AG04449 (cell line): ENCODE measurements at regions of chr9 and their contacts with region 1.

Region 1: GRCh38 chr9:133992780-133993634 is 883 bp upstream of the VAV2 start:
- DNase-seq: peak; percentile 44
- H3K4me3 ChIP-seq: peak overlapping the region; percentile 86
- CTCF ChIP-seq: peak; percentile 50

Region 2: DNA sequence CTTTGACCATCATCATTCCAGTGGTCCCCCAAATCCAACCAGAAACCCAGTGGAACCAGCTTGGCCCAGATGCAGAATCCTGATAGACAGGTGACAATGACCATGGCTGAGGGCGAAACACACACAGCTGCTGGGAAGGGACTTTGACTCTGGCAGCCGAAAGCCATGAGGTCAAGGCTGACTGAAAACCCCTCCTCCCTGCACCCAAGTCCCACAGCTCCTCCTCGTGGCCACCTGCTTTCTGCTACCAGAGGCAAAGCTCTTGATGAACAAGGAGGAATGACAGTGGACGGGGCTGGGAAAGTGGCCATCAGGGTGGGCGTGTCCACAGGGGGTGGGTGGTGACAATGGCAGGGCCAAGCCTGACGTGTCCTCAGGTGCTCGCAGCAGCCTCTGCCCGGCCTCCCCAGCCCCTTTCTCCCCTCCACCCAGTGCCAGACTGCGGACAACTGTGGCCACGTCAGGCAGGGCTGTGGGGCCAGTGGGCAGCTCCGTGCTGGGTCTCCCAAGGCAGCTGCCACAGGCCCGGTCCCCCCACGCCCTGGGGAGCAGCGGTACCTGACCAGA is 224.1 kb before region 1 on chr9:
- CTCF ChIA-PET with region 1: interaction called, 23 read pairs
- POLR2A ChIA-PET with region 1: no interaction called
- DNase-seq: no peak
- H3K4me3 ChIP-seq: no peak overlapping the region
- CTCF ChIP-seq: no peak

Region 3: GRCh38 chr9:133787754-133788025 is 205.3 kb before region 1 on chr9:
- CTCF ChIA-PET with region 1: interaction called, 364 read pairs
- POLR2A ChIA-PET with region 1: interaction called, 11 read pairs
- DNase-seq: no peak
- H3K4me3 ChIP-seq: no peak overlapping the region
- CTCF ChIP-seq: no peak

Region 4: DNA sequence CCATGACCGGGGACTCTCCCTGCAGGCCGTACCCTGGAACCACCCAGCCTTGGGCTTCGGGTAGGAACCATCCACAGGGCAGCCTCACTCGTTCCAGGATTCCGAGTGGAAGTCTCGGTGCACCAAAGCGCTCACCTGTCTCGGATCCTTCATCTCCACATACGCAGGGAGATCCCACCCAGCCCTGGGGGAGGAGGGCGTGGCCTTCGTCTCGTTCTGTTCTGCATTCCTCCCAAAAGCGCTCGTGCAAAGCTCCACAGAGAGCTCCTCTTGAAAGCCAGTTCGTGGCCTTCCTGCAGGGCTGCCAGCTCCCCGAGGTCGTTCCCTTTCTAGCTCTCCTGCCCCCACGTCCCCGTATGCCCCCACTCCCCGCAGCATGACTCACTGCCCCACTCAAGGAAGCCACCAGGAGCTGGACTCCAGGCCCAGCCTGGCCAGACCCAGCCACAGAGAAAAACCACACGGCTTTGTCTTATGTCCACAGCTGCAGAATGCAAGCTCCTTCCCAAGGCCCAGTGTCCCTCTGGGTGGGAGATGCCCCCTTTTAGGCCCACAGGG is 189.9 kb before region 1 on chr9:
- CTCF ChIA-PET with region 1: interaction called, 362 read pairs
- POLR2A ChIA-PET with region 1: no interaction called
- DNase-seq: no peak
- H3K4me3 ChIP-seq: no peak overlapping the region
- CTCF ChIP-seq: no peak

Region 5: DNA sequence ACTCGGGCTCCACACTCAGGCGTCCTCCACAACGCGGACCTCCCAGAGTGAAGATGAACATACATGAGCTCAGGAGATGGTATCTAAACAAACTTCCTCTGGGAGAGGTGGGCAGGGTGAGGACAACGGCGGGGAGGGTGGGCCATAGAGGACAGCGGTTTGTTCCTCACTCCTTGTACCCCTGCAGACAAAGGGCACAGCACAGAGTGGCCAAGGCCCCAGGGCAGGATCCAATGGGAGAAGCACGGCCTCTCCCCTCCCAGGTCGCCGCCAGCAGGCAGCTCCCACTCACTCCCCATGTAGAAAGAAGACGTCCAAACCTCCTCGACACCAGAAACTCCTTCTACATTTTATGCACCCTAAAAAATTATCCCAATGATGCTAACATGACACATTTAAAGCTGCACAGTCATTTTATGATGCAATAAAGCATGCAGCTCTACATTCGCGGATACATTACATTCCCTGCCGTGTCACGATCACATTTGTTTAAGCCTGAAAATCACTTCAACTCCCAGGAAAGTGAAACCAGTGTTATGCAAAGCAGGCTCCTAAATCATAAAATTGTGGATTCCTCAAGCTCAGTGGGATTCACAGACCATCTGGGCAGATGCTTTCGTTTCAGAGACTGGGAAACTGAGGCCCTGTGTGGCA is 167.3 kb before region 1 on chr9:
- CTCF ChIA-PET with region 1: interaction called, 18 read pairs
- POLR2A ChIA-PET with region 1: no interaction called
- DNase-seq: peak; percentile 40
- H3K4me3 ChIP-seq: no peak overlapping the region
- CTCF ChIP-seq: no peak

Region 6: DNA sequence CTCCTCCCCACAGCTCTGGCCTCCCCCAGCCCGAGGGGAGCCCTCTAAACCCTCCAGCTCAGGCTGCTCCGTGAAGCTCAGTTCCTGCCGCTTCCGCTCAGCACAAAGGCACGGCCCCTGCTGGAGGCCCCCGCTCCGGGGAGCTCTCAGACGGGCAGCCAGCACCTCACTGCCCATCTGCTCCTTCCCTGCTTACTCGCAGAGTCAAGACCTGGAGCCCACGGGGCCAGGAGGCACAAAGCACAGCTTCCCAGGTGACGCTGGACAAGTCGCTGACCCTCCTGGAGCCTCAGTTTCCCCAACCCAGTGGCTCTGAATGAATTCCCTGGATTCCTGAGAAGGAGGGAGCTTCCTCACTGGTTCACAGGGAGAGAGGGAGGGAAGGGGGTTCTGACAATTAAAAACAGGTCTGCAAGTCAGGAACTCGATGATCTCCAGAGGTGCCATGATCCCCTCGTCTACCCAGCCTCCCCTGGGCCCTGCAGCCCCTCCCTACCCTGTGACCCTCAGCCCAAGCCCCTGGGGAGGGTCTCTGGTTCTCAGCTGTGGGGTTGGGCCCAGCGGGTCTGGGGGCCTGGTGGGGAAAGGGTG is 37.1 kb before region 1 on chr9:
- CTCF ChIA-PET with region 1: interaction called, 16 read pairs
- POLR2A ChIA-PET with region 1: interaction called, 4 read pairs
- DNase-seq: no peak
- H3K4me3 ChIP-seq: peak overlapping the region; percentile 29
- CTCF ChIP-seq: peak; percentile 28

Region 7: DNA sequence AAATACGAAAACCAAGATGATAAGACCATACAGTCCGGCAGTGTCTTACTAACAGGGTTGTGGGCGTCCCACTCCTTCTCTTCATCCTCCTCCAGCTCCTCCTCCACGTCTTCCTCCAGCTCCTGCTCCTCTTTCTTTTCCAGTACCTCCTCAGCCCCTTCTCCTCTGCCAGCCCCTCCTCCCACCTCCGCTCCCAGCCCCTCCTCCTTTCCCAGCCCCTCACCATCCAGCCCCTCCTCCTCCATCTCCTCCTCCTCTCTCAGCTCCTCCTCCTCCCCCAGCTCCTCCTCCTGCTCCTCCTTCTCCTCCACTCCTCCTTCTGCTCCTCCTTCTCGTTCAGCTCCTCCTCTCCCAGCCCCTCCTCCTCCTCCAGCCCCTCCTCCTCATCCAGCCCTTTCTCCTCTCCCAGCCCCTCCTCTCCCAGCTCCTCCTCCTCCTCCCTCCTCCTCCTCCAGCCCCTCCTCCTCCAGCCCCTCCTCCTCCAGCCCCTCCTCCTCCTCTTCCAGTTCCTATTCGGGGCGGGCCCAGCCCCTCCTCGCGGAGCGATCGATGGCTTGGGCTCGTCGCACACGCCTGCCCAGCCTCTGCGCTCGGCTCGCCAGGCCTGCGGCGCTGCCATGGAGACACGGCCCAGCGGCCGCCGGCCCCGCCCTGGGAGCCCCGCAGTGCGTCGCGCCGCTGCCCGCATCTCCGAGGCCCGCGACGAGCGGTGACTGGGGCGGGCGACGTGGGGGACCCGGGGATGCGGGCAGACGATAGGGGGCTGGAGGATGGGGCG is 32.0 kb after region 1 on chr9 and contains the start of gene BRD3OS:
- CTCF ChIA-PET with region 1: interaction called, 28 read pairs
- POLR2A ChIA-PET with region 1: interaction called, 3 read pairs
- DNase-seq: peak; percentile 97
- H3K4me3 ChIP-seq: peak within 1 kb of the TSS; percentile 90
- CTCF ChIP-seq: no peak

Region 8: GRCh38 chr9:134135343-134136118 is 142.5 kb after region 1 on chr9 and contains the start of gene WDR5:
- CTCF ChIA-PET with region 1: no interaction called
- POLR2A ChIA-PET with region 1: no interaction called
- DNase-seq: peak; percentile 17
- H3K4me3 ChIP-seq: peak within 1 kb of the TSS; percentile 90
- CTCF ChIP-seq: peak; percentile 21

Region 9: DNA sequence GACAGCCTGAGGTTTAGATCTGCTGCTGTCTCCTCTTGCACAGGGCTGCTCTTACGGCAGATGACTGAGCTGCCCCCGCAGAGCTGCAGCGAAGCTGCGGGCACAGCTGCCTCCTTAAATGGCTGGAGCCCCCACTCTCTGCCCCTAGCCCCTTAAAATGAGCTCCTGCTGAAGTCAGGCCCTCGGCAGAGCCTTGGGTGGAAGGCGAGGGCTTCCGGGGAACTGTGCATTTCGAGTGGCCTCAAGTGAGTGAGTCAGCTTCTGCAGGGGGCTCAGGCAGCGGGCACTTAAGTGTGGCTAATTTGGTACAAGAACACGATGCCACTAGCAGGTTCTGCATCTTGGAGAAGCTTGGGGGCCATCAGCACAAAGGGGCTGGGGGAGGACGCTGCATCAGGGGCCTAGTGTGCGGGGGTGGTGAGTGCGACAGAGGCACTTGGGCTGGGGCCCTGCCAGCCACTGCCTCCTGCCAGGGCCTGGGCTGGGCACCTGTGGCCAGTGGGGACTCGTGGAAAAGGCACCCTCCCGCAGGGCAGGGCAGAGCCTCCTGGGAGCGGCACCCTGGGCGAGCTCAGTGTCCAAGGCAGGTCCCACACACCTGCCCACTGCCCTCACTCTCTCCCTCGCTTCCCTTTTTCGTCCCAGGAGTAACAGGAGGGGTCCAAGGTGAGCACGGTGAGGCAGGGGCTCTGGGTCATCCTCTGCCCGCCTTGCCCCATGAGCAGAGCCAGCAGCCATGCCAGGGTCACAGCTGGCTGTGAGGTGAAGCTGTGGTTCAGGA is 200.1 kb after region 1 on chr9:
- CTCF ChIA-PET with region 1: no interaction called
- POLR2A ChIA-PET with region 1: no interaction called
- DNase-seq: no peak
- H3K4me3 ChIP-seq: no peak overlapping the region
- CTCF ChIP-seq: no peak

Region 10: DNA sequence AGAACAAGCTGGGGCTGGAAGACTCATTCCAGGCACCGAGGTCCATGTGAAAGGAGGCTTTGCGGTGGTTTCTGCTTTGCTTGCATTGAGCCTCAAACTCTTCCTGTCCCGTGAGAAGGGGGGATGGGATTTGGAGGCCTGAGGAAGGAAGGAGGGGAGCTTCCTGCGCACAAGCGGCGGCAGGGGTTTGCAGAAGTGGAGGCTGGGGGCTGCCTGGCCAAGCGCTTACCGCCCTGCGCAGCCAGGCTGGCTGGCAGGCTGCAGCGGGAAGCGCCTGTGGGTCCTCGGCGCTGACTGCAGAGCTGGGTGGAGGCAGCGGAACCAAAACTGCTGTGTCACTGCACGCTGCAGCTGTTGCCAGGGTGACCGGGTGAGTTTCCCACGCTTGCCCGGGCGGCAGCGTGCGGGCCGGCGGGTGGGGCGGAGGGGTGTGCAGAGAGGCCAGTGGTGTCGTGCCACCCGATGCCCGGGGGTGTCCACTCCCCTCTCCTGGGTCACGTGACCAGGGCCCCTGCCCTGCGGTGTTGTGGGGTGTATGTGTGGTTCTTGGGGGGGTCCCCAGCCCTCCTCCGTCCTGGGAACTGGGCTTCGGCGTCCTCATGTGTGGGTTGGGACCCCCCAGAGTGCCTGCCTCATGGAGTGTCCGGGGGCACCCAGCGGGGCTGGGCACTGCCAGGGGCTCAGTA is 414.3 kb after region 1 on chr9:
- CTCF ChIA-PET with region 1: no interaction called
- POLR2A ChIA-PET with region 1: no interaction called
- DNase-seq: peak; percentile 47
- H3K4me3 ChIP-seq: peak overlapping the region; percentile 38
- CTCF ChIP-seq: no peak